HCT116 (cell line): ENCODE measurements at regions of chr3 and their contacts with region 1.

Region 1: DNA sequence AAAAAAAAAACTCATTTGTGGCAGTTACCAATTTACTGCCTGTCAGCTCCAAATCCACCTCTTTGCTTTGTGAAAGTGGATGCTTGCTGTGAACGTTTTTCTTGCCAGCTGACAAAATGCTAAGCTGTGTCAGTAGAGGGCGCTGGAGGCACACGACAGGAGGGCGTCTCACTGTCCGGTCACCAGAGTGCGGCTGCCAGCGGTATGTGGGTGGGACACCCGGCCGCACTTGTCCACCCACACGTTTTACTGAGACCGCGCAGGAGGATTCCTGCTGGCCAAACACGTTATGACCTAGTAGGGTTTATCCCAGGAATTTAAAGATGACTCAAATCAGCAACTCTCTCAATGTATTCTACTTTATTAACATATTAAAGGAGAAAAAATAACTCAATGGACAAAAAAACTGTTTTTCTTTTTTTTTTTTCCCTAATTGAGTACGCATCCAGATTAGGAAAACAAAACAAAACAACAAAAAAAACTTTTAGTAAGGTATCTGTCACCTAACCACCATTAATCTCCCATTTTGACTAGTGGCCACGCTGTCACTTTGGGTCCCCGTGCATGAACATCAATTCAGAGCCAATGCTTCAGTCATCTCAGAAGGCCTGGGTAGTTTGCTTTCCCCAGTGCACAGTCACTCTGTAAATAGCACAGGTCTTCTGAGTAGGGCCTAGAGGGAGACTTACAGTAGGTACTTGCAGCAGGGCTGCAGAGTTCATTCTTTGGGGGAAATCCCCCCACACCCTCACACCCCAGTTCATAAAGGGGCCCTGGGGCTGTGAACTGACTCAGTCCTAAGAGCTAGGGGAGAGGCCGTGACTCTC is 43.8 kb upstream of the RPL35A start:
- DNase-seq: peak; percentile 84
- ATAC-seq: peak; percentile 100
- H3K4me3 ChIP-seq: no peak overlapping the region
- H3K27ac ChIP-seq: no peak overlapping the region
- H3K4me1 ChIP-seq: peaks cover 0 to 12% of the 10 kb centered on the region in 2 experiments; a peak in 3 of 4 replicates
- H3K27me3 ChIP-seq: no peaks in the 10 kb centered on the region
- CTCF ChIP-seq: peak; percentile 91 to 94 (median 94)
- POLR2A ChIP-seq: no peak
- RAD21 ChIP-seq: peak; percentile 96

Region 2: DNA sequence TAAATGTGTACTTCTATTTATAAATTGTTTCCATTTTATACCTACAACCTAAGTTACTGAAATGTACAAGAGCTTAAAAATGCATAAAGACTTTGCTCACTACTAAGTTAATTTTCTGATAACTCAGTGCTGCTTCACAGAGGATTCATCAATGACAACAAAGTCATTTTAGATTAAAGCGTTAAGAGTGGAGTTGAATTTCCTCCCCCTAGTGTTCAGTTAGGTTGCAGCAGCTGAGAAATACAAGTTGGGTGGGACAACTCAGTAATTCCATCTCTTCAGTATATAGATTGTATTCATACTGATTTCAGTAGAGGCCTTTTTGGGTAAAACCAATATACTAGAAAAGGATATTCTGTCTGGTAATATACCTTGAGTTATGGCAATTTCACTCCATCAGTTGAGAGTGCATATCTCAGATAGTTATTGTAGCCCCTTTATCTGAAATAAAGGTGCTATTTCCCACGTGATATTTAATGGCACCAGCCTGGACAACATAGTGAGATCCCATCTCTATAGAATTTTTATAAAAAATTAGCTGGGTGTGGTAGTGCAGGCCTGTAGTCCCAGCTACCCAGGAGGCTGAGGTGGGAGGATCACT is 36.8 kb after region 1 on chr3:
- CTCF ChIA-PET with region 1: interaction called, 8 read pairs
- POLR2A ChIA-PET with region 1: no interaction called
- RAD21 ChIA-PET with region 1: no interaction called
- intact Hi-C with region 1: loop called (anchors 1 kb)
- DNase-seq: peak; percentile 61
- ATAC-seq: peak; percentile 81
- H3K4me3 ChIP-seq: no peak overlapping the region
- H3K27ac ChIP-seq: no peak overlapping the region
- H3K4me1 ChIP-seq: no peaks in the 10 kb centered on the region
- H3K27me3 ChIP-seq: no peaks in the 10 kb centered on the region
- CTCF ChIP-seq: peak; percentile 51 to 83 (median 74); a peak in 5 of 6 replicates
- POLR2A ChIP-seq: no peak
- RAD21 ChIP-seq: peak; percentile 54

Region 3: DNA sequence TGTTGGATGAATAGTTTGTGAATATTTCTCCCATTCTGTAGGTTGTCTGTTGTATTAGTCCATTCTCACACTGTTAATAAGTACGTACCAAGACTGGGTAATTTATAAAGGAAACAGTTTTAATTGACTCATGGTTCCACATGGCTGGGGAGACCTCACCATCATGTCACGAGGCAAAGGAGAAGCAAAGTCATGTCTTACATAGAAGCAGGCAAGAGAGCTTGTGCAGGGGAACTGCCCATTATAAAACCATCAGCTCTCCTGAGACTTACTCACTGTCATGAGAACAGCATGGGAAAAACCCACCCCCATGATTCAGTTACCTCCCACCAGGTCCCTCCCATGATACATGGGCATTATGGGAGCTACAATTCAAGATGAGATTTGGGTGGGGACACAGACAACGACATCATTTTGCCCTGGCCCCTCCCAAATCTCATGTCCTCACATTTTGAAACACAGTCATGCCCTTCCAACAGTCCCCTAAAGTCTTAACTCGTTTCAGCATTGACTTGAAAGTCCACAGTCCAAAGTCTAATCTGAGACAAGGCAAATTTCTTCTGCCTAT is 187.0 kb after region 1 on chr3:
- CTCF ChIA-PET with region 1: interaction called, 7 read pairs
- POLR2A ChIA-PET with region 1: no interaction called
- RAD21 ChIA-PET with region 1: no interaction called
- intact Hi-C with region 1: loop called (anchors 5 kb)
- DNase-seq: no peak
- ATAC-seq: no peak
- H3K4me3 ChIP-seq: no peak overlapping the region
- H3K27ac ChIP-seq: no peak overlapping the region
- H3K4me1 ChIP-seq: no peaks in the 10 kb centered on the region
- H3K27me3 ChIP-seq: no peaks in the 10 kb centered on the region
- CTCF ChIP-seq: no peak
- POLR2A ChIP-seq: no peak
- RAD21 ChIP-seq: no peak